ENCODE measurements at regions of chr18 and their contacts with region 1.

Region 1: GRCh38 chr18:47247036-47247832 is 4.2 kb downstream of the SKOR2 start:
- DNase-seq: no peak
- H3K4me3 Mint-ChIP-seq: no peak overlapping the region
- H3K27ac Mint-ChIP-seq: no peak overlapping the region
- H3K4me1 Mint-ChIP-seq: peaks cover 5% of the 10 kb centered on the region
- H3K27me3 Mint-ChIP-seq: peaks cover 70% of the 10 kb centered on the region

Region 2: DNA sequence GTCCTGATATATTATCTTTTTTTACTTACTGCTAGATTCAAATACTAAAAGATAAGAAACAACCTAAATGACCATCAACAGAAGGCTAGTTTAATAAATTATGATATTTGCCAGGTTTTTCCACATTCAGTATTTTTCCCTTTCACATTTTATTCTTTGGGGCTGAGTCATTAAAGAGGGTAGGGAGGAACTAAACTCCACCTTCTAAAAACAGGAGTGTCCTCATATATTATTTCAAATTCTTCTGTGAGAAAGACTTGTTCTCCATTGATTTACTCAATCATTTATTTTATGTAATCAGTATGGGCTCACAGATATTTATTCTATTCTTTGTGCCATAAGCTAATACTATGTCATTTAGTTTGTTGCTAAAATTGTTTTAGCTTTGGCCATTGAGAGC is 105.9 kb before region 1 on chr18:
- intact Hi-C with region 1: no loop called
- DNase-seq: no peak
- H3K4me3 Mint-ChIP-seq: no peak overlapping the region
- H3K27ac Mint-ChIP-seq: no peak overlapping the region
- H3K4me1 Mint-ChIP-seq: no peaks in the 10 kb centered on the region
- H3K27me3 Mint-ChIP-seq: no peaks in the 10 kb centered on the region

Region 3: DNA sequence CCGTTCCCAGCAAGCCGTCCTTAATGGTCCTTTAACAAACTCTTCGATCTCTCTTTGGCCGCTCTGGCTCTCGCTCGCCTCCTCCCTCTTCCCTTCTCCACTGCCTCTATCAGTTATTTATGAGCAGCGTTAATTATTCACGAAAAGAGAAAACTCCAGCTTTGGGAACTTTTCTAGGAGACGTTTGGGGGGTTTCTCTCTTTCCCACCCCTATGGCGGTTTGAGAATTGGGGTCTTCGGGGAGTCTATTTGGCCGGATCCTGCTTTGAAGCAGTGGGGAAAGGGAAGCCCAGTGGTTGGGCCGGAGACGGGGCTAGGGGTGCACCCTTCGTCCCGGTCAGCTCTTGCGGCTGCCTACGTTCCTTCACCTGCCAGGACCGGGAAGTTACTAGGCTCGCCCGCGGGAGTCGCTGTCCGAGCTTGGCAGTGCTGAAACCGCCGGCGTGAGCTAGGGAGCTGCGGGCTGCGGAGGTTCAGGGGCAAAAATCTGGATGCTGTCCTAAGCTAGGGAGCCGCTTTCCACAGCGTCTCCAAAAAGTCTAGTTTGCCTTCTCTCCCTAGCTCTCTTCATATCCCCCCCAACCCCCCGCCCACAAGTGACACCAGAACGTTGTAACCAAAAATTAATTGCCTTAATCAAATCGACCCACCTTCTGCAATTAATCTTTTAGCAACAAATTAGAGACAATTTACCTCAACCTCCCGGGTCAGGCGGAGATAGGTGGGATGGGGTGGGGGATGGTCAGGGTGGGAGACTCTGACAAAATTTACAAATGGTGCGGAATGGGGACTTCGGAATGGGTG is 13.1 kb after region 1 on chr18:
- intact Hi-C with region 1: loop called (anchors 2 kb)
- DNase-seq: no peak
- H3K4me3 Mint-ChIP-seq: no peak overlapping the region
- H3K27ac Mint-ChIP-seq: no peak overlapping the region
- H3K4me1 Mint-ChIP-seq: no peaks in the 10 kb centered on the region
- H3K27me3 Mint-ChIP-seq: peaks cover 65% of the 10 kb centered on the region

Region 4: DNA sequence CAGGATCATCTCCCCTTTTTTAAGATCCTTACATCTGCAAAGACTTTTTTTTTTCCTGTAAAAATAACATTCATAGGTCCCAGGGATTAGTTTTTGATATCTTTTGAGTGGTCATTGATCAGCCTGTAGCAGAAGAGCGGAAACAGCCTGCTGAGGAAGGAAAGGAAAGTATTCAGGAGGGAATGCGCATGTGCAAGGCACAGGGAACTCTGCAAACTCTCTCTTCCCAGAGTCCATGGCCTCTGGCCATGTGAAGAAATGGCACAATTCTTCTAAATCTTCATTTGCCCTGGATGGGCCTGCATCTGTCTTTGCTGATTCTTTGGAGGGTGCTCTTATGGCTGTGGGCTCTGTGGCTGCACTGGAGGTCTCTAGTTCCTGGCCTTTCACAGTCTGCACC is 64.4 kb after region 1 on chr18:
- intact Hi-C with region 1: no loop called
- DNase-seq: no peak
- H3K4me3 Mint-ChIP-seq: no peak overlapping the region
- H3K27ac Mint-ChIP-seq: no peak overlapping the region
- H3K4me1 Mint-ChIP-seq: no peaks in the 10 kb centered on the region
- H3K27me3 Mint-ChIP-seq: peaks cover 4% of the 10 kb centered on the region

Region 5: GRCh38 chr18:47331026-47331425 is 83.8 kb after region 1 on chr18:
- intact Hi-C with region 1: no loop called
- DNase-seq: no peak
- H3K4me3 Mint-ChIP-seq: no peak overlapping the region
- H3K27ac Mint-ChIP-seq: no peak overlapping the region
- H3K4me1 Mint-ChIP-seq: no peaks in the 10 kb centered on the region
- H3K27me3 Mint-ChIP-seq: peaks cover 18% of the 10 kb centered on the region

Region 6: GRCh38 chr18:47545613-47546012 is 298.4 kb after region 1 on chr18:
- intact Hi-C with region 1: no loop called
- DNase-seq: no peak
- H3K4me3 Mint-ChIP-seq: no peak overlapping the region
- H3K27ac Mint-ChIP-seq: no peak overlapping the region
- H3K4me1 Mint-ChIP-seq: no peaks in the 10 kb centered on the region
- H3K27me3 Mint-ChIP-seq: peaks cover 5% of the 10 kb centered on the region

Measured in activated T-helper 1 cell treated with anti-CD3 and anti-CD28 coated beads, Interleukin-12 subunit alpha, Interleukin-12 subunit beta, Interleukin-2, Interleukin-4 antibody, amounts not matched to agents 30 ng/mL and 10 ng/mL and 1 ng/mL, durations not matched to agents 14 hours and 24 hours and 36 hours (primary cell).